Activated CD8-positive, alpha-beta T cell treated with anti-CD3 and anti-CD28 coated beads for 36 hours (primary cell): ENCODE measurements at regions of chr6 and their contacts with region 1.

Region 1: DNA sequence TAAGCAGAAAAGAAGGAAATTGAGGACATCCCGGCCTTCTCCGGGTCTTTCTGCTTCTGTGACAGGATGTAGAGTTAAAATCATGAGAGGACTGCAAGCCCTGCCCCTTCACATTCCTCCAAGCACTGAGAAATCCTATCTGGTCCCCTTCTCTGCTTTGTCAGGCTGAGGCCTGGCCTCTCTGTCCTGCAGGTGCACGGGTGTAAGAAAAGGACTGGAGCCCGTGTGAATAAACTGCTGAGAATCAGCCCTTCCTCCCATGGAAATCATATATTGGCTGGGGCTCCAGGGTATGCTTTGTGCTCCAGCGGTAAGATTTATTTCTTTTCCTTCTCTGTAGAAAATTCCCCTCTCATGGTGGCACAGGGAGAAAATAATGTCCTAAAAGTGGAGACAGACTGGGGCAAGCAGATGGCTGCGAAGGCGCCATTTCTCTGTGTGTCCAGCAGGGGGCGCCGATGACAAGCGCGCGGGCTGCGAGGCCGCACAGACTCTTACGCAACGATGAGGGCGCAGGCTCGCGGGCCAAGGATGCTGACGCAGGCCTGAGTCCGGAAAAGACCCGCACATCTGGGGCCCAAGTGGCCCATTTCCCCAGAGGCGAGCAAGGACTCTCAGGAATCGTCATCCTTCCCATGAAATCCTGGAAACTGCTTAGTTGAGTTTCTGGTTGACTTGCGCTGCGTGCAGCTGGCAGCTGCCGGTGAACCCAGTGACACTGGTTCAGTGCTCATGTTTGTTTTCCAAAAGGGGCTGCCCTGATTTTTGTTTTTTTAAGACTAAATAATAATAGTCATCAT is 258.6 kb downstream of the ADGB start:
- DNase-seq: peak; percentile 82
- ATAC-seq: peak; percentile 88
- H3K4me3 Mint-ChIP-seq: no peak overlapping the region
- H3K27ac Mint-ChIP-seq: no peak overlapping the region
- H3K4me1 Mint-ChIP-seq: peaks cover 24% of the 10 kb centered on the region
- H3K27me3 Mint-ChIP-seq: no peaks in the 10 kb centered on the region
- CTCF ChIP-seq: peak; percentile 97

Region 2: DNA sequence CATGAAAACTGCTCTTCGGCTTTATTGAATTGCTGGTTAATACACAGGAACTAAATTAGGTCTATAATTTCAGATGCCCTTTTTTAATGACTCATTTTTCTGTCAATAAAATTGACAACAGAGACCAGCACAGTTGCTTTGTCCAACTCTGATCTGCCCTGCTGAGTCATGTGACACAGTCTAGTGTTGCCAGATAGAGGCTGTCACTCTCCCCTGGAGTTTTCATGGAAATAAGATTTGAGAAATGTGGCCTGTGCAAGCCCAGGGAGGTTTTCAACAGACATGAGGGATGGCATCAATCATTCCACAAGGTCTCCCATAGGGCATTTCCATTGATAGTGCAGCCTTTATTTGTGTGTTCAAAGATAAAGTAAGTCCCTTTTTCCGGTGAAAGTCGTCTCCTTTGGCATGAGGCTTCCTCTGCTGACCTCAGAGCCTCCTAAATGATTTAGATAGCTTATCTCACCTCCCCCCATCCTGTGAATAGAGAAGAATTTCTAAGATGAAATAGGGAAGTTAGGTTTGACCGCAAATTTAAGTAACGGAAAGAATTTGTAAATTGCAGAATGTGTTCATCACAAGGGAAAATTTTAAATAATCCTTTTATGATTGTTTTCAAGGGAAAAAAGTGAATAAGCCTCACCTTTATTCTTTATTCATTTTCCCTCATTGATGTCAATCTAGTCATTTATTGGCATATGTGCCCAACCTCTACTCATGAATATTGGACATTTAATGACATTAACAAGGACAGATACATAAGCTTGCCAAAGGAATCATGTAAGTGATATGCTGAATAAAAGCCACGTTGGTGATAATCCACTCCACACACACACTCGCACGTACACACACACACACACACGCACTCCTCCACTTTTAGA is 19.1 kb after region 1 on chr6:
- CTCF ChIA-PET with region 1: no interaction called
- POLR2A ChIA-PET with region 1: no interaction called
- intact Hi-C with region 1: no loop called
- DNase-seq: no peak
- ATAC-seq: peak; percentile 57
- H3K4me3 Mint-ChIP-seq: no peak overlapping the region
- H3K27ac Mint-ChIP-seq: peak overlapping the region; percentile 44
- H3K4me1 Mint-ChIP-seq: peaks cover 29% of the 10 kb centered on the region
- H3K27me3 Mint-ChIP-seq: peaks cover 2% of the 10 kb centered on the region
- CTCF ChIP-seq: no peak

Region 3: DNA sequence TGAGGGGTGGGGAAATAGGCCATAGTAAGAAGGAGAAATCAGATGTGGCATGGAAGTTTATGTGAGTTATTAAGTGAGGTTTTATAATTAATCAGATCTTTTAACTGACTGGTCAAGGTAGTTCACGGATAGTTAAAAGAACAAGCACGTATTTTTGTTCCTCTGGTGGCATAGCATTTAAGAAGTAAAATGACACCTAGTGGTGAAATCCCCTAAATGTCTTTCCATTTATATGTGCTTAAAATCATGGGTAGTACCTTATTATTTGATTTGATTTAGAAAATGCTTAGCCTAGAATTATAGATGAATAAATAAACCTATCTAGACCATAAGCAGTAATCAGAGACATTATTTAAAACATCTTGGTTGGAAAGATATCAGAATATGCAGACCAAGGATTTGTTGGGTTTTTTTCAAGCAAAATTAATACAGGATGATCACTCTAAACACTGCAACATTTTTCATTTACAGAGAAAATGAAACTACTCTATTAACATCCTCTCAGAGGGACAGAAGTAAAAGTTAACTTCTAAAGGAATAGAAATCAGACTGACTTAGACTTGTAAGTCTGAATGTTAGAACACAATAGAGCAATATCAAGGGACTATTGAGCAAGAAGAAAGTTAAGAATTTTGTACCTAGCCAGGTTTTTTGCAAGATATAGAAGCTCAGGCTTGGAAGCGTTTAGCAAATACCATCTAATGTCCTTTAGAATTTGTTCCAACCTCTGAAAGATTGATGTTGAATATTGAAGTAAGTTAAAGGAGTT is 427.9 kb after region 1 on chr6:
- CTCF ChIA-PET with region 1: interaction called, 7 read pairs
- POLR2A ChIA-PET with region 1: no interaction called
- intact Hi-C with region 1: loop called (anchors 2 kb)
- DNase-seq: no peak
- ATAC-seq: peak; percentile 43
- H3K4me3 Mint-ChIP-seq: peak overlapping the region; percentile 13
- H3K27ac Mint-ChIP-seq: peak overlapping the region; percentile 64
- H3K4me1 Mint-ChIP-seq: peaks cover 44% of the 10 kb centered on the region
- H3K27me3 Mint-ChIP-seq: no peaks in the 10 kb centered on the region
- CTCF ChIP-seq: peak; percentile 60

Region 4: DNA sequence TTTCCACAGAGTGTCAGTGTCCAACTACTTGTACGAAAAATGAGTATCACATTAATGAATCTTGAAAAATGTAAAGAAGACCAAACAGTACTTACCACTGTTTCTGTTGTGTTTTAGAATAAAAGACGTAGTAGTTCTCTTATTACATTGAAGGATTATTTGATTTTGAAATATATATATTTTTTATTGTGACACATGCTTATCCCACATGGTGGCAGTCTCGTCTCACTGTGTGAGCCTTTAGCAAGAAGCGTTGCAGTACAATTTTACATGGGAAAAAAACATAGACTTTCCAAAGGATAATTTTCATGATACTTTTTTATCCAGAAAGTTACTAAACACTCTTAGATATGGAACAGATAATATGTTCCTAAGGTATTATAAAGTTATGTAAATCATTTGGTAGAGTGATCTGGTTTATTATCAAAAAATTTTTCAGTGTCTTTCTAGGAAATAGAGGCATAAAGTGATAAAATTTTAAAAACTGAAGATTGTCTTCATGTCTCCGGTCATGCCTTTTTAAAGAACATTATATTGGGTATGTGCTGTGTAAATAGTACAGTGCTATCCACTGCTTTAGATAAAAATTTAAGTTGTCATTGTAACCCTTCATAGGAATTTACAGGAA is 533.6 kb after region 1 on chr6:
- CTCF ChIA-PET with region 1: no interaction called
- POLR2A ChIA-PET with region 1: no interaction called
- intact Hi-C with region 1: loop called (anchors 10 kb)
- DNase-seq: peak; percentile 29
- ATAC-seq: no peak
- H3K4me3 Mint-ChIP-seq: no peak overlapping the region
- H3K27ac Mint-ChIP-seq: no peak overlapping the region
- H3K4me1 Mint-ChIP-seq: peaks cover 19% of the 10 kb centered on the region
- H3K27me3 Mint-ChIP-seq: no peaks in the 10 kb centered on the region
- CTCF ChIP-seq: peak; percentile 27